ENCODE measurements at regions of chr1 and their contacts with region 1.

Region 1: DNA sequence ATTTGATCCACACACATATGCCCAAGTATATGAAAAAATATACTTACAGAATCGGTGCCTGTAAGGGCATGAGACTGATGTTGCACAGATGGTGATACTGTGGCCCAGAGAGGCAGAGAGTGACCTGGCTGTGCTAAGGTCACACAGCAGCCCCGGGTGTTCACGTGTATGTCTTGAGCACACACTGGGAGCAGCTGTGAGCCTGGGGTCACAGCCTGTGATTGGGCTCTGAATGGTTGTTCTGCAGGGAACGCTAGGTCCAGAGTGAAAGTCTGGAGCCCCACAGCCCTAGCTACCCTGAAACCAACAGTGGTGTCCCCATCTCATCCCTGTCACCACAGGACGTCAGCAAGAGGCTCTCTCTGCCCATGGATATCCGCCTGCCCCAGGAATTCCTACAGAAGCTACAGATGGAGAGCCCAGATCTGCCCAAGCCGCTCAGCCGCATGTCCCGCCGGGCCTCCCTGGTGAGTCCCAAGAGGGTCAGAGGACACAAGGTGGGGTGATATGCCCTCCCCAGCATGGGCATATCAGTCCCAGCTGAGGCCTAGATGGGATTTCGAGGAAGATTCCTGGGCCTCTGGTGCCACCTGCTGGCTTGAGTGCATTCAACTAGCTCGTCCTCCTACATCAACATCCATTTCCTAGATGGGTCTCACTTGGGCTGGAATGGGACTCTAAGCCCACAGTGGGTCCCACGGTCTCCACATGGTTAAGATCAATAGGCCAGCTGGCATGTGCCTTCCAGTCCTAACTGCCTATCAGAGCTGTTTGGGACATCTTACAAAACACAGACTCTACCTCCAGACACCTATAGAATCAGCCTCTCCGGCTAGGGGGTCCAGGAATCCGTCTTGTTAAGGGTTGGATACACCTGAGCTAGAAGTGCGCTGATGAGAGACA is 19.7 kb downstream of the CDK18 start:
- DNase-seq: peak; percentile 79
- ATAC-seq: peak; percentile 67
- H3K4me3 Mint-ChIP-seq: no peak overlapping the region
- H3K27ac Mint-ChIP-seq: no peak overlapping the region
- H3K4me1 Mint-ChIP-seq: no peaks in the 10 kb centered on the region
- H3K27me3 Mint-ChIP-seq: peaks cover 3% of the 10 kb centered on the region

Region 2: GRCh38 chr1:205335643-205336091 is 188.5 kb before region 1 on chr1:
- CTCF ChIA-PET with region 1: interaction called, 14 read pairs
- DNase-seq: peak; percentile 84
- ATAC-seq: peak; percentile 82
- H3K4me3 Mint-ChIP-seq: no peak overlapping the region
- H3K27ac Mint-ChIP-seq: no peak overlapping the region
- H3K4me1 Mint-ChIP-seq: peaks cover 18% of the 10 kb centered on the region
- H3K27me3 Mint-ChIP-seq: peaks cover 46% of the 10 kb centered on the region

Region 3: DNA sequence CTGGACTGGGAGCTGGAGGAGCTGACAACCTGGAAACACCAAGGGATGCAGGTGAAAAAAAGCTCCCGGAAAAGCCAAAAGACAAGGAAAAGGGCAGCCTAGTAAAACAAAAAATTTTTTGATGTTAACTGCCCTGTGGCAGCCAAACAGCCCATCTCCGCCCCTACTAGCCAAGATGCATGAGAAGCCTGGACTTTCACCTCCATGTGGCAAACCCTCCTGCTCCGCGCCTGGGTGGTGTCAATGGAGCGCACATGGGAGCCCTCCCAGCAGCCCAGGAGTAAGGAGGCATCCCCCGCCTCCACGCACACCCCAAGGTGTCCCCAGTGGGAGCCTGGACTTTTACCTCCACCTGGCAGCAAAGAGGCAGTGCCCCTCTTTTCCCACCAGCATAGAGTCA is 132.8 kb before region 1 on chr1:
- CTCF ChIA-PET with region 1: interaction called, 60 read pairs
- DNase-seq: no peak
- ATAC-seq: no peak
- H3K4me3 Mint-ChIP-seq: no peak overlapping the region
- H3K27ac Mint-ChIP-seq: no peak overlapping the region
- H3K4me1 Mint-ChIP-seq: no peaks in the 10 kb centered on the region
- H3K27me3 Mint-ChIP-seq: peaks cover 43% of the 10 kb centered on the region

Region 4: GRCh38 chr1:205500240-205501233 is 23.6 kb before region 1 on chr1:
- CTCF ChIA-PET with region 1: interaction called, 11 read pairs
- DNase-seq: no peak
- ATAC-seq: no peak
- H3K4me3 Mint-ChIP-seq: no peak overlapping the region
- H3K27ac Mint-ChIP-seq: no peak overlapping the region
- H3K4me1 Mint-ChIP-seq: peaks cover 12% of the 10 kb centered on the region
- H3K27me3 Mint-ChIP-seq: peaks cover 19% of the 10 kb centered on the region

Region 5: GRCh38 chr1:205536759-205537361 is 12.7 kb after region 1 on chr1:
- CTCF ChIA-PET with region 1: interaction called, 22 read pairs
- DNase-seq: peak; percentile 49
- ATAC-seq: peak; percentile 56
- H3K4me3 Mint-ChIP-seq: no peak overlapping the region
- H3K27ac Mint-ChIP-seq: peak overlapping the region; percentile 31
- H3K4me1 Mint-ChIP-seq: peaks cover 14% of the 10 kb centered on the region
- H3K27me3 Mint-ChIP-seq: peaks cover 21% of the 10 kb centered on the region

Region 6: GRCh38 chr1:205591522-205592351 is 67.6 kb after region 1 on chr1:
- CTCF ChIA-PET with region 1: interaction called, 14 read pairs
- DNase-seq: peak; percentile 91
- ATAC-seq: peak; percentile 95
- H3K4me3 Mint-ChIP-seq: peak overlapping the region; percentile 82
- H3K27ac Mint-ChIP-seq: peak overlapping the region; percentile 85
- H3K4me1 Mint-ChIP-seq: peaks cover 26% of the 10 kb centered on the region
- H3K27me3 Mint-ChIP-seq: no peaks in the 10 kb centered on the region

Region 7: GRCh38 chr1:205616563-205617293 is 92.6 kb after region 1 on chr1:
- CTCF ChIA-PET with region 1: no interaction called
- DNase-seq: no peak
- ATAC-seq: no peak
- H3K4me3 Mint-ChIP-seq: no peak overlapping the region
- H3K27ac Mint-ChIP-seq: no peak overlapping the region
- H3K4me1 Mint-ChIP-seq: peaks cover 22% of the 10 kb centered on the region
- H3K27me3 Mint-ChIP-seq: no peaks in the 10 kb centered on the region

Measured in activated CD8-positive, alpha-beta memory T cell treated with anti-CD3 and anti-CD28 coated beads, Interleukin-2, amount 10 ng/mL, durations not matched to agents 7 days and 5 days (primary cell).